Esophagus squamous epithelium (tissue), 5 donors: ENCODE measurements at regions of chr1 and their contacts with region 1.

Region 1: DNA sequence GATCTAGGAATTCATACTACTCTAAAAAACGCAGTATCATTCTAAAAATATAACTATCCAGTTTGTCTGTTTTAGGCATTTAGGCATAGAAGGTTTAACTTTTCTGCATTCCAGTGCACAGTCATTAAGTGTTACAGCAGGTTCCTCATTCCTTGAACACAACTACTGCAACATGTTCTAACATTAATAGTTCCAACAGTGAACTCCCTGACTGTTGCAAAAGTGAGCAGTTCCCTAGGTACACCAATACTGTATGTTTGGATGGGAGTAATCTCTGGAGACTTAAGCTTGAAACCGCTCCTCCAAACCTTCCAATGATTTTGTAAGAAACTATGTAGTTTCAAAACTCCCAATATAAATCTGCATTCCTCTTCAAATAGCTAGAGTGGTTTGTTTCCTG is 46.2 kb downstream of the UCHL5 start:
- DNase-seq: no peak
- H3K4me3 ChIP-seq: no peak overlapping the region
- H3K27ac ChIP-seq: peak overlapping the region in 1 of 4 donors; percentile 9
- H3K4me1 ChIP-seq: no peaks in the 10 kb centered on the region
- H3K27me3 ChIP-seq: no peaks in the 10 kb centered on the region
- CTCF ChIP-seq: no peak
- POLR2A ChIP-seq: no peak

Region 2: GRCh38 chr1:192496371-192497056 is 516.5 kb before region 1 on chr1:
- intact Hi-C with region 1: no loop called
- DNase-seq: no peak
- H3K4me3 ChIP-seq: no peak overlapping the region
- H3K27ac ChIP-seq: peak overlapping the region in 1 of 4 donors; percentile 4
- H3K4me1 ChIP-seq: no peaks in the 10 kb centered on the region
- H3K27me3 ChIP-seq: no peaks in the 10 kb centered on the region
- CTCF ChIP-seq: no peak
- POLR2A ChIP-seq: no peak

Region 3: GRCh38 chr1:192808518-192809306 is 204.3 kb before region 1 on chr1 and contains the start of gene RGS2:
- intact Hi-C with region 1: loop called (anchors 5 kb)
- DNase-seq: peak; percentile 69
- H3K4me3 ChIP-seq: peak within 1 kb of the TSS; percentile 48 to 86 (median 72)
- H3K27ac ChIP-seq: peak within 1 kb of the TSS; percentile 84 to 96 (median 90)
- H3K4me1 ChIP-seq: peaks cover 0 to 42% (median 13%) of the 10 kb centered on the region in 3 donors
- H3K27me3 ChIP-seq: no peaks in the 10 kb centered on the region
- CTCF ChIP-seq: peak in 1 of 6 experiments; percentile 2
- POLR2A ChIP-seq: peak in 3 of 4 donors; percentile 90 to 99 (median 99)
- total RNA-seq, gene RGS2: 7.9 to 115 (median 26.6) TPM

Region 4: DNA sequence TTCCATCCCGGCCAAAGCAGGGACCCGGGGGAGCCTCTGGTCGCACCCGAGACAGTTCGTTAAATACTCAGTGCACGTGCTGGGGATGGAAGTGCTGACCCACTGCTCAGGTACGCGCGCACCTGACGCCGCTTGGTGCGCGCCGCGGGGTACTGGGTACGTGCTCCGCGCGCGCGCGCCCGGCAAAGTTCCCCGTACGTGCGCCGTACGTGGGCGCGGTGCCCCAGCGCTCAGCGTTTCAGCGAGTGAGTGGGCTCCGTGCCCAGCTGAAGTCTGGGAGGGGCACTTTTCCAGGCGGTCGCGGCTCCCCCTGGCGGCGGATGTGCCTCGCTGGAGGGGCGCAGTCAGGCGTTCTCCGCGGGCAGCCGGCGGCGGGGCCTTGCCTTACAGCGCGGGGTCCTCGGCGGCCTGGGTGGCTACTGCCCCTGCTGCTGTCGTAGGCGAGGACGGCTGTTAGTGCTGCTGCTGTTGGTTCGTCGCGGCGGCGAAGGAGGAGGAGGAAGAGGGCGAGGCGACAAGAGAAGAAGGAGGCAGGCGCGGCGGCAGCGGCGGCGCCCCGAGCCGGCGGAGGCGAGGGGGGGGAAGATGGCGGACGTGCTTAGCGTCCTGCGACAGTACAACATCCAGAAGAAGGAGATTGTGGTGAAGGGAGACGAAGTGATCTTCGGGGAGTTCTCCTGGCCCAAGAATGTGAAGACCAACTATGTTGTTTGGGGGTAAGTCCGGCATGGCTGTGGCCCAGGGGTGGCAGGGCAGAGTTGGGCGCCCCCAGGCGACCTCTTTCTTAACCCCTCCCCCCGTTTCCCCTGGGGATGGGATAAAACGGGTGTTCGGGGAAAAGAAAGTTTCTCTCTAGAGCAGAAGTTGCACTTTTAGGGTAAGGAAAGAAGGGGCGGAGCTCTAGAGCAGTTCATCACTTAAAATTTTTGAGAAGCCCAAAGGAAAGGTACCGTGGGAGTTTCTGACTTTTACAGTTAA is 108.9 kb after region 1 on chr1 and contains the start of gene CDC73:
- intact Hi-C with region 1: no loop called
- DNase-seq: peak; percentile 88
- H3K4me3 ChIP-seq: peak within 1 kb of the TSS; percentile 67 to 90 (median 79)
- H3K27ac ChIP-seq: peak within 1 kb of the TSS; percentile 85 to 97 (median 96)
- H3K4me1 ChIP-seq: peaks cover 6 to 41% (median 13%) of the 10 kb centered on the region in 3 donors
- H3K27me3 ChIP-seq: no peaks in the 10 kb centered on the region
- CTCF ChIP-seq: peak; percentile 84 to 99 (median 96)
- POLR2A ChIP-seq: peak in 2 of 4 donors; percentile 83 to 90
- total RNA-seq, gene CDC73: 17.3 to 39.5 (median 26.6) TPM